ENCODE measurements at regions of chr5 and their contacts with region 1.

Region 1: GRCh38 chr5:77560677-77561263 is 68.7 kb upstream of the WDR41 start:
- DNase-seq: peak; percentile 26
- H3K4me3 Mint-ChIP-seq: no peak overlapping the region
- H3K27ac Mint-ChIP-seq: no peak overlapping the region
- H3K4me1 Mint-ChIP-seq: no peaks in the 10 kb centered on the region
- H3K27me3 Mint-ChIP-seq: no peaks in the 10 kb centered on the region
- CTCF ChIP-seq: peak; percentile 36

Region 2: DNA sequence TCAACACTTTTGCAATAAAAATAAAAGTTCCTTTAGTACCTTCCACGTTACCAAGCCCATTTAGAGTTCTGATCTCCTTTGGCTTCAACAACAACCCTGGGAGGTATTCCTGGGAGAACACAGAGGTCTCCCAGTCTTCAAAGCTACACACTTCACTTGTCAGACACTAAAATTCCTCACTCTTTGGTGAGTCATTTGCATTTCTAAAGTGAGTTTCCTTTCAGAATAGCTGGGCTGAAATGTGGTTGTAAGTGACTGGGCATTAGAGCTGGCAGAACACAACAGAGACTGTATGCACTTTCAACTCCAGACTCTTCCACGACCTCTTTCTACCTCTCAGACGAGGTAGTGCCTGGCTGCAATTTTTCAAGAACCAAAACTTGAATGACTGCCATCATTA is 753.5 kb before region 1 on chr5:
- CTCF ChIA-PET with region 1: no interaction called
- intact Hi-C with region 1: no loop called
- DNase-seq: no peak
- H3K4me3 Mint-ChIP-seq: no peak overlapping the region
- H3K27ac Mint-ChIP-seq: no peak overlapping the region
- H3K4me1 Mint-ChIP-seq: peaks cover 50% of the 10 kb centered on the region
- H3K27me3 Mint-ChIP-seq: no peaks in the 10 kb centered on the region
- CTCF ChIP-seq: no peak

Region 3: DNA sequence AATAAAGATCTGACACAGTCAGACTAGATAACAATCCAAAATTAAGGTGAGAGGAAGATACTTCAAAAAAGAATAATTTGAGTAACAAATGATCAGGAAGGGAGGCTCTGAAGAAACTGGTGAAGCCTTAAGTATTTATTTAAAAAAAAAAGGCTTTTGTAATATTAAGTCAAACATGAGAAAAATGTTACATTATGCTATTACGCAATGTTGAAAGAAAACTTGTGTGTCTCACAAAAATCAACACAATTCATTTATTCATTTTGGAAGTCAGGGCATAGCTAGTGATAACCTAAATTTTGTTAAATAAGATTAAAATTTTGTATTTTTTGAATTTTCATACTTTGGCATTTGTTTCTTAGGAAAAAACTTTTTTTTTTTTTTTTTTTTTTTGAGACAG is 96.9 kb before region 1 on chr5:
- CTCF ChIA-PET with region 1: no interaction called
- intact Hi-C with region 1: no loop called
- DNase-seq: no peak
- H3K4me3 Mint-ChIP-seq: no peak overlapping the region
- H3K27ac Mint-ChIP-seq: peak overlapping the region; percentile 42
- H3K4me1 Mint-ChIP-seq: peaks cover 6% of the 10 kb centered on the region
- H3K27me3 Mint-ChIP-seq: no peaks in the 10 kb centered on the region
- CTCF ChIP-seq: no peak

Region 4: DNA sequence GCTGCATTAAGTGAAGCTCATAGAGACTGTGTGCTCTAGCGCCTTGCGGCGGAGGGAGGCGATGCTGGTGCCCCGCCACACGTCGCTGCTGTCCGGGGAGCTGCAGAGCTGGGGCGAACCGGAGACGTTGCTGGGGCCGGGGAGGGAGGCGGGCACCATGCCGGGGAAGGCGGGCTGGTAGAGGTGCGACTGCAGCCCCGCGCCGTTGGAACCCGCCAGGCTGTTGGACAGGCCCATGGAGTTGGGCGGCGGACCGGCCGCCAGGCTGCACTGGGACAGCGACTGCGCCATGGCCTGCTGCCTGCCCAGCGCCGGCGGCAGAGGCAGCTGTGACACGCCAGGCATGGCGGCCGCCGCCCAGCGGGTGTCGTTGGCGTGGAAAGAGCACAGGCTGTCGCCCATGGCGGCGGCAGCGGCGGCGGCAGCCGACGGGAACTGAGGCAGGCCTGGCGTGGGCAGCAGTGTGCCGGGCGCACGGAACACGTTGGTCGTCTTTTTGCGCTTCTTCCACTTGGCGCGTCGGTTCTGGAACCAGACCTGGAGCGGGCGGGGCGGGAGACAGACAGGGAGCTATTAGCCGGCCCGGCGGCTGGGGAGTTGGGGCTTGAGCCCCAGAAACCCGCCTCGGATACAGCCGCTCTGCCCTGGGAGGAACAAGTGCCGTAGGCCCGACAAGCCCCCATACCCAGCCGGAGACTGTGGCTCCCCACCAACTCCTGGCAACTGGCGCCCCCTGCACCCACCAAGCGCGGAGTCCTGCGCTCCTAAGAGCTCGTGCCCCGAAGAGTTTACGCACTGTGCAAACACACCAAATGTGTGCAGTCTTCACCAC is 69.7 kb after region 1 on chr5:
- CTCF ChIA-PET with region 1: interaction called, 14 read pairs
- intact Hi-C with region 1: loop called (anchors 5 kb)
- DNase-seq: peak; percentile 94
- H3K4me3 Mint-ChIP-seq: peak overlapping the region; percentile 92
- H3K27ac Mint-ChIP-seq: peak overlapping the region; percentile 74
- H3K4me1 Mint-ChIP-seq: peaks cover 21% of the 10 kb centered on the region
- H3K27me3 Mint-ChIP-seq: peaks cover 15% of the 10 kb centered on the region
- CTCF ChIP-seq: no peak

Region 5: GRCh38 chr5:77761606-77762005 is 200.8 kb after region 1 on chr5:
- CTCF ChIA-PET with region 1: no interaction called
- intact Hi-C with region 1: no loop called
- DNase-seq: no peak
- H3K4me3 Mint-ChIP-seq: no peak overlapping the region
- H3K27ac Mint-ChIP-seq: no peak overlapping the region
- H3K4me1 Mint-ChIP-seq: peaks cover 17% of the 10 kb centered on the region
- H3K27me3 Mint-ChIP-seq: no peaks in the 10 kb centered on the region
- CTCF ChIP-seq: no peak

Region 6: GRCh38 chr5:78008356-78008967 is 447.7 kb after region 1 on chr5:
- CTCF ChIA-PET with region 1: interaction called, 5 read pairs
- intact Hi-C with region 1: loop called (anchors 1 kb)
- DNase-seq: peak; percentile 29
- H3K4me3 Mint-ChIP-seq: no peak overlapping the region
- H3K27ac Mint-ChIP-seq: no peak overlapping the region
- H3K4me1 Mint-ChIP-seq: peaks cover 12% of the 10 kb centered on the region
- H3K27me3 Mint-ChIP-seq: no peaks in the 10 kb centered on the region
- CTCF ChIP-seq: peak; percentile 71

Region 7: DNA sequence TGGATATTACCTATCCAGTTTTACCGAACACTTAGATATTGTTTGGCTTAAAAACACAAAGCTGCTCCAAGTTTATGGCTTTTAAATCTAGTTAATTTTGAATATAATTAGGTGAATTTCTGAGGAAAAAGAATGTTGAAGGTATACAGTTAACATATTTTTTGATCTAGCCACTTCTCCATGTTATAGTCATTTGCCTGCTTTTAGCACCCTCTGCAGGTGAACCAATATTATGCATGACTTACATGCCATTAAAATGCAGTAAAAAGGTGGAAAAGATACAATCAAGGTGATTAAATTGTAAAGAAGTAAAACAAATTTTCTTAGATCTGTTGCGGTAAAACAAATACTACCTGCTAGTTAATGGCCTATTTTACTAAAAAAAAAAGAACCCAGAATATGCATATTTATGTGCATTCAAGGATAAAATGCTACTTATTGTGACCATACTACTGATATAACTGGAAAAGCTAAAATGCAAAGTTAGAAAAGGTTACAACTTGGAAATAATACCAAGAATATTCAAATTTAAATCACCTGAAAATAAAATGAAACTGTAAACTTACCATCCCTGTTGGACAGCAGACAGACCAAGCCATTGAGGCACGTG is 601.6 kb after region 1 on chr5:
- CTCF ChIA-PET with region 1: no interaction called
- intact Hi-C with region 1: loop called (anchors 2 kb)
- DNase-seq: peak; percentile 35
- H3K4me3 Mint-ChIP-seq: no peak overlapping the region
- H3K27ac Mint-ChIP-seq: no peak overlapping the region
- H3K4me1 Mint-ChIP-seq: no peaks in the 10 kb centered on the region
- H3K27me3 Mint-ChIP-seq: no peaks in the 10 kb centered on the region
- CTCF ChIP-seq: peak; percentile 32

Region 8: DNA sequence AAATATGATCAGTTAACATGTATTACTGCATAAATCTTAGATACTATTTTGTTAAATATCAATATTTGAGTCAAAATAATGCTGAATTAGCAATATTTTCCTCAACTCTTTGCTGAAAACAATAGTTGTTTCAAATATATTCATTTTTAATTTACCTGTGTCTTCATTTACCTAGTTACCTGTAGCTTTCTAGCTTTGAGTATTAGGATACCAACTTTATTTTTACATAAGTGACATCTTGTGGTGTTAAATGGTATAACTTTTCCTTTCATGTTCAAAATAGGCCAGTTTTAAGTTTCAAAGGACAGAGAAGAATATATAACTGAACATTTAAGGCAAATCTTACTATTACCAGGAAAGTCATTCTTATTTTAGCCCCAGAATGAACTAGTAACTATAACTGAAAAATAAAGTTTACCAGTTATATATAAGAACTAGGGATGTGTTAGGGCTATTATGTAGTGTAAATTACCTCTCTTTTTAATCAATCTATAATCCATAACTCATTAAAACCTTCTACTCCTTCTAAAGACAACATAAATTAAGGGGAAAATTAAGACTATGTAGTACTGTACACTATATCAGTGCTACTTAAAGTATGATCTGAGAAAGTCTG is 708.4 kb after region 1 on chr5:
- CTCF ChIA-PET with region 1: interaction called, 4 read pairs
- intact Hi-C with region 1: loop called (anchors 1 kb)
- DNase-seq: no peak
- H3K4me3 Mint-ChIP-seq: no peak overlapping the region
- H3K27ac Mint-ChIP-seq: no peak overlapping the region
- H3K4me1 Mint-ChIP-seq: no peaks in the 10 kb centered on the region
- H3K27me3 Mint-ChIP-seq: no peaks in the 10 kb centered on the region
- CTCF ChIP-seq: peak; percentile 43

Measured in Calu3 (cell line).